GM10248 (cell line): ENCODE measurements at regions of chr14 and their contacts with region 1.

Region 1: DNA sequence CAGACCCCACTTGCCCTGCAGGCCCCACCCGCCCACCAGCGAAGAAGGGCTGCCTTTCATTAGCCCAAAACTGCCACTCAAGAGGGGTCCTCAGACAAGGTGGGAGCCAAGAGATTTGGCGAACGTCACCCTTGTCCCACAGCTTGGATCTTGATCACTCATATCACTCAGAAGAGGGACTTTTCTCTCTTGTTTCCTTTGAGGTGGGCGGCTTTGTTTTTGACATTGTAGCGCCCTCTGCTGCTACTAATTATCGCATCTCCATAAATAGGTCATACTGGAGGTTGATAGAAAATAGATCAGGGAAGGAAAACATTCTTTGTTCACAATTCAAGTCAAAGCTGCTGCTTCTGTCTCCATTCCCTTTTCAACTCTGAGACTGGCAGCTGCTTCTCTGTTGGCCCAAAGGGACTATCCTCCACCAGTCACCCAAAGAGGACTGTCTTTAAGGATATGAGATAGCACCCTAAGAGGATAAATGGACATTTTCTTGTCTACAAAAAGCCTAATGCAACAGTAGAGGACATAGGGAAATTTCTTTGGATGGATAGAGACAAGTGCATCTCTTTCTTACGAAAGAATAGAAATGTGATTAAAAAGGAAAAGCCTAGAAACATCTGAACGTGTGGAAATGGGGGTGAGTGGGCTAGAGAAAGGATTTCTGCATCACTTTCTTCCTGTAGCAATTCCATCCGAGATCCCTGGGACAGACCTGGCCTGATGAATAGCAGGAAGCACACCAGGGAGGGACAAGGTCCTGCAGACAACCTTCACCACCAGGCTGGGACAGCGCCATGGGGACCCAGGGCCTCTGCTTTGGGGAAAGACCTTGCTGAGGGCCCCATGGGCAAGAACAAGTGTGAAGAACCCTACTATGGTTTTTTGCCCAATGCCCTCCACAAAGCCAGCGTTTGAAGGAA is 115.8 kb downstream of the DAD1 start:
- DNase-seq: peak; percentile 71
- CTCF ChIP-seq: peak; percentile 61

Region 2: GRCh38 chr14:22319526-22320361 is 153.5 kb before region 1 on chr14:
- CTCF ChIA-PET with region 1: interaction called, 53 read pairs
- POLR2A ChIA-PET with region 1: interaction called, 3 read pairs
- DNase-seq: peak; percentile 52
- CTCF ChIP-seq: peak; percentile 79

Region 3: DNA sequence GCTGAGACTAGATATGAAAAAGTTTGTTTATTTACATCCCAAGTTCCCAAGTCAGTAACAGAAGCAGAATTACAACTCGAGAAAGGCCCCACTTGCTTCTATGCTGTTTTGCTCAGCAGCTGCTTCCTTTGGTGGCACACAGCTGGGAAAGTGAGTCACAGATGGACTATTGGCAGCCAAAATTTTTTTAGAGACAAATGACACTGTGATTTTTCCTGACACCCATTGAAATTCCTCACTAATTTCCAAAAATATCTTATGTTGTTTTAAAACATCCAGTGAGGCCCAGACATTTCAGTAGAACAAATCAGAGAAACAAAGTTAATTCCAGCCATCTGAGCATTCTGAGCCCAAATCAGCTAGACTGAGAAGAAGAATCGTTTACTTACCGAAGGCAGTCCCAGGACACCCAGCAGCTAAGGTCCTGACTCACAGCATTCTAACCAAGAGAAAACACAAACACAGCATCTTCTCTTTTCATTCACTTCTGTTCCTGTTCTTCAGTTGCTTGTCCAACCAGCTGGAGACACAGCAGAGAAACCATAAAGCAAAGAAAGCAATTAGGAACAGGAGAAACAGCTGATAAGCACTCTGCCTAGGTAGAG is 72.4 kb before region 1 on chr14:
- CTCF ChIA-PET with region 1: interaction called, 322 read pairs
- POLR2A ChIA-PET with region 1: no interaction called
- DNase-seq: no peak
- CTCF ChIP-seq: no peak

Region 4: DNA sequence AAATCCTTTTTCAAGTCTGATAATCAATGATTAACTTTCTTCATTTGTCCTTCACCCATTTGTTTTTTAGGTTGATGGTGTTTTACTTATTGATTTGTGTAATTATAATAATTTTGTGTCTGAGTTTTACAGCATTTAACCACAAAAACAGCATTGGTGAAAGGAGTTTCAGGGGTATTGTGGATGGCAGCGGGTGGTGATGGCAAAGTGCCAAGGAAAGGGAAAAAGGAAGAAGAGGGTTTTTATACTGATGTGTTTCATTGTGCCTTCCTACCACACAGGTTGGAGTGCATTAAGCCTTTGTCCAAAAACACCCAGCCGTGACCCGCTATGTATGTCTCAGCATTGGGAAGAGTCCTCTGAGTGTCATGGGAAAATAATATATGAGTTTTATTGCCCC is 34.5 kb before region 1 on chr14:
- CTCF ChIA-PET with region 1: interaction called, 16 read pairs
- POLR2A ChIA-PET with region 1: no interaction called
- DNase-seq: no peak
- CTCF ChIP-seq: no peak

Region 5: DNA sequence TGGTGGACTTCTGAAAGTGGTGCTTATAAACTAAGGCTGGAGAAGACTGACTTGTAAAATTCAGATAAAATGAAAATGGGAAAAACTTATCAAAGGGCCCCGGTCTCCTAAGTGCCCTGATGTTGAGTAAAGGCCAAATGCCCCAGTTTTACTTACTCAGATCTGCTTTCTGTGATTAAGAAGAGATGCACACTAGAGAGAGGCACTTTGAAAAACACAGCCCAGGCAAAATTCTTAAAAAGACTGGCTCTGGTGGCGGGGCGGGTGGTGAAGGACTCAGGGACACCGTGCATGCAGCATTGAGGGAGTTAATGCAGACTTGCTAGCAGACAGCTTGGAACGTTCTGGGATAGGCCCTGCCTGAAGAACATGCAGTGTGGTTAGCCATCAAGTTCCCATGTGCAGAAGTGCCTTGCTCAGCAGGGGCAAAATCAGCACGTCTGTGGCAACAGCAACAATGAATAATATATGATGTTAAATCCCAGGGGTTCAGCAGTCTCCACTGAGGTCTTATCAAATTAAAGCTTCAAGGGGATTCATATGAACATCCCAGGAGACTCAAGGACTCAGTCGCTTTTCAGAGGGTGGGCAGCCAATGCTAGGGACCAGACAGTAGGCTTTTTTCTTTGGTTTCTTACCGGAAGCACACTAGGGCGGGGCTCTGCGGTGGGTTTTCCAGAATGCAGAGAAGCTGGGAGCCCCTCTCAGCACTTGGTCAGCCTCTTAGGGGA is 10.8 kb after region 1 on chr14:
- CTCF ChIA-PET with region 1: interaction called, 49 read pairs
- POLR2A ChIA-PET with region 1: no interaction called
- DNase-seq: no peak
- CTCF ChIP-seq: no peak

Region 6: GRCh38 chr14:22519877-22520685 is 46.9 kb after region 1 on chr14:
- CTCF ChIA-PET with region 1: interaction called, 18 read pairs
- POLR2A ChIA-PET with region 1: no interaction called
- DNase-seq: no peak
- CTCF ChIP-seq: no peak